Uterus (tissue), 4 donors: ENCODE measurements at regions of chr1 and their contacts with region 1.

Region 1: DNA sequence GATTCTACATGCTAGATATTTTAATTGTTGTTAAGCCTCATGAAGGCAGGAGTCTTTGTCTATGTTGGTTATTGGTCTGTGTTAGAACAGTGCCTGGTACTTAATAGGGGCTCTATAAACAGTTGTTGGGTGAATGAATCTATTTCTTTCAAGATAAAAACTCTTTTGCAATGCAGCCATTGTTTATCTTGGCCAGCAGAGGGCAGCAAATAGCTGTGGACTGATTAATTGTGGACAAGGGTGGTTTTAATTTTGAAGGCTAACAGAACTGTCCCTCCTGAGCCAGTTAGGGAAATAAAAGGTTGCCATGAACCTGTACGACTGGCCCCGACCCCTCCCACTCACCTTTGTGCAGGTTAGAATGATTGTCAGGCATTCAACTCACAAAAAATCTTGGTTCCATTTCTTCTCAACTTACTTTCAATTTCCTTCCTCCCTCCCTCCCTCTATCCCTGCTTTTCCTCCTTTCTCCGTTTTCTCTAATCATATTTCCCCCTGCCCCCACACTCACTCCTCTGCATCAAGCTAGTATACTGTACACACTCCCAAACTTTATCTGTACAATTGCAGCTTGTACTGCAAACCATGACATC is 66.3 kb upstream of the DIRAS3 start:
- DNase-seq: peak; percentile 49 to 63
- H3K4me3 ChIP-seq: peak overlapping the region in 1 of 2 donors; percentile 14
- H3K27ac ChIP-seq: no peak overlapping the region
- H3K4me1 ChIP-seq: no peaks in the 10 kb centered on the region
- H3K27me3 ChIP-seq: no peaks in the 10 kb centered on the region
- CTCF ChIP-seq: peak; percentile 84 to 86 (median 86)
- POLR2A ChIP-seq: no peak

Region 2: GRCh38 chr1:67532452-67533216 is 584.1 kb before region 1 on chr1:
- intact Hi-C with region 1: loop called (anchors 5 kb)
- DNase-seq: peak; percentile 24 to 63
- H3K4me3 ChIP-seq: no peak overlapping the region
- H3K27ac ChIP-seq: no peak overlapping the region
- H3K4me1 ChIP-seq: no peaks in the 10 kb centered on the region
- H3K27me3 ChIP-seq: no peaks in the 10 kb centered on the region
- CTCF ChIP-seq: peak; percentile 70 to 90 (median 80)
- POLR2A ChIP-seq: no peak

Region 3: GRCh38 chr1:68346188-68346808 is 229.6 kb after region 1 on chr1:
- intact Hi-C with region 1: loop called (anchors 5 kb)
- DNase-seq: no peak
- H3K4me3 ChIP-seq: no peak overlapping the region
- H3K27ac ChIP-seq: no peak overlapping the region
- H3K4me1 ChIP-seq: no peaks in the 10 kb centered on the region
- H3K27me3 ChIP-seq: no peaks in the 10 kb centered on the region
- CTCF ChIP-seq: peak; percentile 41 to 59 (median 50)
- POLR2A ChIP-seq: no peak